Cardiac septum (tissue), 1 donor: ENCODE measurements at regions of chr7 and their contacts with region 1.

Region 1: DNA sequence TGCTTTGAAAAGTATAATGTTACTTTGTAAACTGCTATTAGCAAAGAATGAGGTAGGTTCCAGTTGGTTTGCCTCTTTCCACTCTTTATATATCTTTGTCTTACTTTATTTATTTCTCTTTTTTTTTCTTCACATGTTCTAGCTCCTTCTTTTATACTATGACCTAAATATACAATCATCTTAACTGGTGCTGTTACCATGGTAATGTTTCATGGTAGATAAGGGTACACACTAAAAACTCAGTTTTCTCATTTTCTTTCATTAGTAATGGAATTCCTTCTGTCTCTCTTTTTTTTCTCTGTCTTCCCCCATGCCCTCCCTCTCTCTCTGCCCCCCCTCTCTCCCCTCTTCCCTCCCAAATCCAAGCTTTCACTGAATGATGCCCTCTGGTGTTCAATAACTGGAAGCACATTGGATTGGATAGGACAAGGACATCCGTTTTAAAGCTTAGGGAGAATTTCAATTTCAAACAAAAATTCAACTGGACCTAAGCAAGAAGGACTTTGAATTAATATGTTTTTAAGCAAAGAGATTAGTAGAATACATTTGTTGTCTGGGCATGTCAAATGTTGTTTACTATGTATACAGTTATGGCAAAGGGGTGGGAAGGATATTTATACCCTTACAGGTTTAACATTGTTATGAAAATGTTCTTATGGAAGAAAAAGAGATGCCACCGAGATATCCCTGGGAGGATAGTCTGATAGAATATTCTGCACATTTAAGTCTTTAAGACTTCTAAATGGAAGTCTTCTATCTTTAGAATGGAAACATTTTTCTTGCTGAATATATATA is 6.0 kb downstream of the CHRM2 start:
- DNase-seq: no peak

Region 2: DNA sequence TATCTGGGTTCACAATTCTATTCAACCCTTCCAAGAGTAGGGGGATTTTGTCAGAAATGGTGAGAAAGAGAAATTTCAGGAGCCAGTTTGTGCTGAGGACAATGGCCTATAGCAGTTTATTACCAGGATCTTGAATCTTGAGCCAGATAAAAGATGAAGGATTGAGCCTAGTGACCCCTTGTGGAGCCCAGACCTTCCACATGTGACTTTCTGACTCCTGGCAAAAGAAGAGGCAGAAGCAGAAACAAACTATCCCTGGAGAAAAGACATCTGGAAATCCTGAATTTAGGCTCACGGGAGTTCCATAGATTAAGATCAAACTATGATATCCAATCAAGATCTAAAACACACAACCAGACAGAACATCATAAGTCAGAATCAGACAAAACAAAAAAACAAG is 66.8 kb before region 1 on chr7:
- intact Hi-C with region 1: no loop called
- DNase-seq: no peak

Region 3: GRCh38 chr7:137006293-137006692 is 131.9 kb after region 1 on chr7:
- intact Hi-C with region 1: loop called (anchors 5 kb)
- DNase-seq: no peak

Region 4: DNA sequence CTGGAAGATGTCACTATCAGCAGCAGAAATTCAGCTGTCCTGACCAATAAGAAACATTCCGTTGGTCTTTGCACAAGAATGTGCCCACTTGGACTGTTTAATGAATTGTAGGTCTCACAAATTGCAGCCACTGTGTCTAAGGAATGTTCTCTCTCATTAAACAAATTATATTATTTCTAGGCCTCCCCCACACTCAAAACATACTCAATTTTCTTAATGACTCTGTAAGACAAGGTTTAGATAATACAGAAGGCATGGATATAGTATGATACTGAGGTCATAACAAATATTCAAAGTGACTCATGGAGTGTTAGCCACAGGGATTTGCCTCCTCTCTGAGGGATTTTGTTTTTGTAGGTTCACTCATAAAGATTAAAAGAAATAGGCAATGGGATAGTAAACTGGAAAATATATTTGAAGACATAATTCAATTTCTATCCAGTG is 271.6 kb after region 1 on chr7:
- intact Hi-C with region 1: loop called (anchors 10 kb)
- DNase-seq: no peak